ENCODE measurements at regions of chr1 and their contacts with region 1.

Region 1: GRCh38 chr1:112849425-112850033 is 106.5 kb downstream of the SLC16A1 start:
- H3K4me3 ChIP-seq: peak overlapping the region; percentile 52
- H3K27ac ChIP-seq: peak overlapping the region; percentile 70; the same call in 1 of the 2 replicates
- H3K4me1 ChIP-seq: no peaks in the 10 kb centered on the region
- CTCF ChIP-seq: no peak; the same call in 1 of the 2 replicates

Region 2: GRCh38 chr1:112904071-112904830 is 54.7 kb after region 1 on chr1:
- CTCF ChIA-PET with region 1: no interaction called
- POLR2A ChIA-PET with region 1: no interaction called
- H3K4me3 ChIP-seq: no peak overlapping the region
- H3K27ac ChIP-seq: no peak overlapping the region
- H3K4me1 ChIP-seq: no peaks in the 10 kb centered on the region
- CTCF ChIP-seq: no peak

Region 3: DNA sequence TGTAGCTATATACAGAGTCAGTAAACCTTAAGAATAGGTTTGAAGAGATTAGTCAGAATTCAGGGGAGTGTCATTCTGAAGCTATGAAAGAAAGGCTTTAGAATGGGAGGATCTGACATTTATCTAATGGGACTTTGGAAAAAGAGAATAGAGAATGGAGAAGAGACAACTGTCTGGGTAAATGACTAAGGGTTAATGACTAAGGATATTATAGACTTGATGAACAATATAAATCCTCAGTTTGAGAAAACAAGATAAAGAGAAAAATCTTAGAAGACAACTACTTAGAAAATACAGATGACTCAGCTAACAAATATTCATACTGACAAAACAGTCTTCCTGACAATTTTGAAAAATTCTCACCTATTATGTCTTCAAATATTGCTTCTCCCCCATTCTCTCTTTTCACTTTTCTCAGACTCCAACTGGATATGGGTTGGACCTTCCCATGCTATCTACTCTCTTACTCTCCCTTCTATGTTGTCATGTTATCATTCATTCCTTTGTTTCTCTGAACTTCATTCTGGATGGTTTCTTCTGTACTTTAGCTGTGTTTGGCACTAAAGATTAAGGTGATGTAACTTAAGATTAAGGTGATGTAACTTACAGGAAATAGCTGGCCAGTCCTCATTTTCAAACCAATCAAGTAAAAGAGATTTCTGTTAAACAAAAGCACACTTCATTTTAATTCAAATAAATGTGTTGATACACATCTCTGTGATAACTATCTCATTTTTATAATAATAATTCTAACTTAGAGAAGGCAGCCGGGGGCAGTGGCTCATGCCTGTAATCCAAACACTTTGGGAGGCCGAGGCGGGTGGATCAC is 86.1 kb after region 1 on chr1:
- CTCF ChIA-PET with region 1: no interaction called
- POLR2A ChIA-PET with region 1: interaction called, 10 read pairs
- H3K4me3 ChIP-seq: no peak overlapping the region
- H3K27ac ChIP-seq: no peak overlapping the region
- H3K4me1 ChIP-seq: peaks cover 16% of the 10 kb centered on the region
- CTCF ChIP-seq: no peak